ENCODE measurements at regions of chr9 and their contacts with region 1.

Region 1: DNA sequence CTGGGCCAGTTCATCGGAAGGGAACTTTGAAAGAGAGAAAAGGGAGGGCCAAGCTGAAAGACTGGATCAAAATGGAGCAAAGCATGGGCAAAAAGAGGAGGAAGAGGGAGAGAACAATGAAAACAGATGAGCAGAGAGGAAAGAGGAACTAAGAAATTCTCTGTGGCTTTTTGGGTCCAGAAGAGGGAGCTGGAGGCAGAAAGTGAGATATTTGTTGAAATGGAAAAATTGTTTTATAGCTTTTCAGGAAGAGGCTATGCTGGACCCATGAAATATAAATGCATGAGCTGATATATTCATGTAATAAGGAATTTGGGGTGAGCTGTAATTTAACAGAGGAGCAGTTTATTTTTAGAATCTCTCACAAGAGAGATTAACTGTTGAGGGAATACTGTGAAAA is 457.3 kb downstream of the DMAC1 start:
- DNase-seq: no peak
- ATAC-seq: no peak
- H3K4me3 ChIP-seq: no peak overlapping the region
- H3K4me3 Mint-ChIP-seq: no peak overlapping the region
- H3K27ac ChIP-seq: no peak overlapping the region
- H3K27ac Mint-ChIP-seq: no peak overlapping the region
- H3K4me1 ChIP-seq: no peaks in the 10 kb centered on the region
- H3K4me1 Mint-ChIP-seq: no peaks in the 10 kb centered on the region
- H3K27me3 ChIP-seq: no peaks in the 10 kb centered on the region
- H3K27me3 Mint-ChIP-seq: peaks cover 0 to 17% of the 10 kb centered on the region in 2 donors
- CTCF ChIP-seq: no peak

Region 2: DNA sequence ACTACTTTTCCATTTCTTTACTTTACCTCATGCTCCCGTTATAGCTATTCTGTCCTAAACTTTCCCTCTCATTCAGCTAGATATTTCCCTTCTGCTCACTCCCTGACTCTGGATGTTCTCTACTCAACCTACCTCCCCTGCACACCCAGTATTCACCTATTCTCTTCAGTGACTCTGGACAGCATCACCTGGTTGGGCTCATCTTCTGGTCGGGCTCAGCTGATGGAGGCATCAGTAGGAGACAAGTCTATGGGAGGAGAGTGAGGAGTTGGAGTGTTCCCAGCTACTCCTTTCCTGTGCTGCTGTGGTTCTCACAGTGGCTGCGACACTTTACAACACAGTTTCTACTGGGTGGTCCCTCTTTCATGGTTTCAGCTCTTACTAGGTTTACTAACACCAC is 36.6 kb before region 1 on chr9:
- intact Hi-C with region 1: loop called (anchors 5 kb)
- DNase-seq: no peak
- ATAC-seq: no peak
- H3K4me3 ChIP-seq: no peak overlapping the region
- H3K4me3 Mint-ChIP-seq: no peak overlapping the region
- H3K27ac ChIP-seq: no peak overlapping the region
- H3K27ac Mint-ChIP-seq: no peak overlapping the region
- H3K4me1 ChIP-seq: no peaks in the 10 kb centered on the region
- H3K4me1 Mint-ChIP-seq: no peaks in the 10 kb centered on the region
- H3K27me3 ChIP-seq: peaks cover 4% of the 10 kb centered on the region
- H3K27me3 Mint-ChIP-seq: peaks cover 25 to 43% of the 10 kb centered on the region in 2 donors
- CTCF ChIP-seq: no peak